Head of caudate nucleus (tissue), 42 donors: ENCODE measurements at regions of chr16 and their contacts with region 1.

Region 1: GRCh38 chr16:48609652-48610029 is 339 bp downstream of the N4BP1 start:
- DNase-seq: peak in 14 of 42 donors; percentile 32 to 73 (median 53)

Region 2: GRCh38 chr16:48244080-48244862 is 365.4 kb before region 1 on chr16 and contains the start of gene LONP2:
- intact Hi-C with region 1: loop called (anchors 10 kb)
- DNase-seq: peak; percentile 88 to 97 (median 94)

Region 3: DNA sequence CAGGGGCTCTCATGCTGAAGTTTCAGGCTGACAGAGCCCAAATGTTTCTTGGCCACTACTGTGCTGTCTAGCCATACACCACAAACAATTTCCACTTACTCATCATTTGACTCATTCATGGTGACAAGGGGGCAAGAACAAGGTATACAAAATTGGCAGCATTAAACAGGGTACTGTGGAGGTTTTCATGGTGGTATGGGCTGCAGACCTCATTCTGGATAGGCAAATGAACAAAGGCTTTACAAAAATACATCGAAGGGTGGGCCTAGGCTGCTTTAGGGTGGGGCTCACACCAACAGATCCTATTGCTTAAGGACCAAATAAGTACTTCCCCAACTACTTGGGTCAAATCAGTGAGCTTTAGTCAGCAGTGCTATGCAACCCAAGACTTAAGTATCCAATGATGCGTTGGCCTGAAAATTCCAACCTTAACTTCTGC is 52.7 kb before region 1 on chr16:
- intact Hi-C with region 1: loop called (anchors 5 kb)
- DNase-seq: no peak

Region 4: DNA sequence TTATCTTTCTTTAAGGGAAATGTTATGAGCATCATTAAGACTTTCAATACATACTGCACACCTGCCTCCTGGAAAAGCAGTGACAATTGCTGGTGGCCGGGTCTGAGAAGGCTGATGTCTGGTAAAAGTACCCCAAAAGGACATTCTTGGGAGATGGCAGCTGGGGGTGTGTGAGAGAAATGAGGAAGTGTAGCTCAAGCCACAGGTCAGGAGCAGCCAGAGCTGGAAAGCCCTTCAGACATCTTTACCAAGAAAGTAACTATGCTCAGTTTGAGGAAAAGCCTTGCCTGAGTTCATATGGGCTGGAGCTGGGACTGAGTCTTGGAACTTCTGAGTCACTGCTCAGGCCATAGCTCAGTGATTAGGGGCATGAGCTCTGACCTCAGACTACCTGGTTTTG is 95.1 kb after region 1 on chr16:
- intact Hi-C with region 1: no loop called
- DNase-seq: no peak

Region 5: DNA sequence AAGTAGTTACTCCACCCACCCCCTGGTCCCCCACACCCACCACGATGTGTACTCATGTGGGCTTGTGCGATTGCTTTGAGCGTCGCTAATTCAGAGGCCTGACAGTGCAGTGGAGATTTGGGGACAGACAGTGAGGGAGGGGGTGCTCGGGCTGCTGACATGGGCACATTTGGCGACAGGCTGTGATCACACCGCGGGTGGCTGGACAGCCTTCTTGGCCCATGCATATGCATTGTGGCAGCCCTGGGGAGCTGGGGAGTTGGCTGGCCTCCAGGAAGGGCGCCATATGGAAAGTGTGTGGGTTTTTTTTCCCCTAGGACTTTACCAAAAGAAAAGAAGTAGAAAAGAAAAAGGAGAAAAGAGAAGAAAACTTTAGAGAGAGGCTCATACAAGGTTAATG is 275.8 kb after region 1 on chr16:
- intact Hi-C with region 1: no loop called
- DNase-seq: no peak